ENCODE measurements at regions of chr11 and their contacts with region 1.

Region 1: DNA sequence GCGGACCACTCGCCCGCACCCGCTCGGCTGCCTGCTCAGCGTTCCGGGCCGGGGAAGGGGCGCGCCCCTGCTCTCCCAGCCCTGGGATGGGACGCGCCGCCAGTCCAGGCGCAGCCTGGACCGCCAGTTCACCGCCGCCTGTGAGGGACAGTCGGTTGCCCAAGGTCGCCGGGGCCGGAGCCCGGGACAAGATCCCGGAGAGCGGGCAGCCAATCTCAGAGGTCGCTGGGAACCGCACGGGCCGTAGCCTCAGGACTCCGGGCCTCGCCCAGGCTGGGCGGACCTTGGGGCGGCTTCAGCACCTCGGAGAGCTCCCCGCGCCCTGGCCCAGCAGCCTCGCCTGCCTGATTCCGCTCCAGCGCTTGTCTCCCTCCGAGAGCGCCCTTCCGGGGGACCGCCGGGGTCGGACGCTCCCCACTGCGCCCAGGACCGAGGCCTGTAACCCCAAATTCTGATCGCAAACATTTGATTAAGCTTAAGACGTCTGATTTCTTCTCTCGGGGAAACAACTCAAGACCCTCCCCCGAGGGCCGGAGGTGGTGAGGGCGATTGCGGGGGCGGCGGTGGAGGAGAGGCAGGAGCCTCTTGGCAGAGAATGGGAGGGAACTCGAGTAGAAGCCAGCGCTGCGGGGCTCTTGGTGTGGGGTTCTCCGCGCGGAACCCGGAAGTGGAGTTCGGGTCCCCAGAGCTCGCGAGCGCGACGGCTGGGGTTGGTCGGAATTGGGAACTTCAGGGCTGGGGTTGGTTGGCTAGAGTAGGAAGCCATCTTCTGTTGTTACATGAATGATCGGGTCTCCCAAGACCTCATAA is 1.1 kb upstream of the CHRM4 start:
- DNase-seq: peak; percentile 85
- ATAC-seq: peak; percentile 94
- H3K4me3 ChIP-seq: peak overlapping the region in 1 of 5 experiments; percentile 16
- H3K4me3 Mint-ChIP-seq: peak overlapping the region; percentile 76
- H3K27ac ChIP-seq: no peak overlapping the region
- H3K27ac Mint-ChIP-seq: no peak overlapping the region
- H3K4me1 ChIP-seq: peaks cover 28 to 43% of the 10 kb centered on the region in 2 donors
- H3K4me1 Mint-ChIP-seq: peaks cover 19% of the 10 kb centered on the region
- H3K27me3 ChIP-seq: peaks cover 0 to 48% (median 29%) of the 10 kb centered on the region in 4 experiments
- H3K27me3 Mint-ChIP-seq: peaks cover 29% of the 10 kb centered on the region
- CTCF ChIP-seq: no peak

Region 2: GRCh38 chr11:46338988-46339666 is 53.5 kb before region 1 on chr11:
- CTCF ChIA-PET with region 1: no interaction called
- POLR2A ChIA-PET with region 1: no interaction called
- intact Hi-C with region 1: no loop called
- DNase-seq: no peak
- ATAC-seq: no peak
- H3K4me3 ChIP-seq: no peak overlapping the region
- H3K4me3 Mint-ChIP-seq: no peak overlapping the region
- H3K27ac ChIP-seq: no peak overlapping the region
- H3K27ac Mint-ChIP-seq: no peak overlapping the region
- H3K4me1 ChIP-seq: peaks cover 0 to 5% of the 10 kb centered on the region in 2 donors
- H3K4me1 Mint-ChIP-seq: no peaks in the 10 kb centered on the region
- H3K27me3 ChIP-seq: peaks cover 0 to 37% (median 12%) of the 10 kb centered on the region in 4 experiments
- H3K27me3 Mint-ChIP-seq: peaks cover 49% of the 10 kb centered on the region
- CTCF ChIP-seq: no peak

Region 3: DNA sequence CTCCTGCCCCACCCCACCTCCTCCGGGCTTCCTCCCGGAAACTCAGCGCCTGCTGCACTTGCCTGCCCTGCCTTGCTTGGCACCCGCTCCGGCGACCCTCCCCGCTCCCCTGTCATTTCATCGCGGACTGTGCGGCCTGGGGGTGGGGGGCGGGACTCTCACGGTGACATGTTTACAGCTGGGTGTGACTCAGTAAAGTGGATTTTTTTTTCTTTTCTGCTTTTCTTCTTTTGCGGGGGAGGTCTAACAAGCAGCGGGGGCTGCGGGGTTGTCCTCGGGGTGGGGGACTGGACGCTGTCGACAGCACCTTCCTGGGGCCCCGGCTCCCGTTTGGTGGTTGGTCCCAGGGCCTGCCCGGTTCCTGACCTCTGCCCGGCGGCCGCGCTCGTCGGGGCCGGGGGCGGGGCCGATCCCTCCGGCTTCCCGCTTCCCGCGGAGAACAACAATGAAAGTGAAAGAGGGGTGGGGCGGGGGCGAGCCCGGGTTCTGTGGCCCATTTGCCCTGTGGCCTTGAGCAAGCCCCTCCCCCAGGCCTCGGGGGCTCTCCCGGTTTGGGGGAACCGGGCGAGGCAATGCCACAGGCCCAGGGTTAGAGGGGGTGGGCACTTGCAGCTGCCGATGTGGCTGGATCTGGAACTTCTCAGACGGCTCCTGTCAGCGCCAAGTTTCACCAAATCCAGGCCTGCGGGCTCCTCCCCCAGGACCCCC is 12.1 kb before region 1 on chr11:
- CTCF ChIA-PET with region 1: interaction called, 6 read pairs
- POLR2A ChIA-PET with region 1: interaction called, 5 read pairs
- intact Hi-C with region 1: loop called (anchors 1 kb)
- DNase-seq: peak; percentile 65
- ATAC-seq: peak; percentile 61
- H3K4me3 ChIP-seq: peak overlapping the region; percentile 34 to 84 (median 69)
- H3K4me3 Mint-ChIP-seq: peak overlapping the region; percentile 85
- H3K27ac ChIP-seq: peak overlapping the region in 1 of 2 donors; percentile 43
- H3K27ac Mint-ChIP-seq: peak overlapping the region; percentile 56
- H3K4me1 ChIP-seq: peaks cover 14 to 15% of the 10 kb centered on the region in 2 donors
- H3K4me1 Mint-ChIP-seq: peaks cover 12% of the 10 kb centered on the region
- H3K27me3 ChIP-seq: peaks cover 0 to 38% (median 20%) of the 10 kb centered on the region in 4 experiments
- H3K27me3 Mint-ChIP-seq: peaks cover 24% of the 10 kb centered on the region
- CTCF ChIP-seq: no peak

Region 4: GRCh38 chr11:46529095-46529905 is 136.7 kb after region 1 on chr11:
- CTCF ChIA-PET with region 1: interaction called, 10 read pairs
- POLR2A ChIA-PET with region 1: no interaction called
- intact Hi-C with region 1: no loop called
- DNase-seq: peak; percentile 79
- ATAC-seq: peak; percentile 100
- H3K4me3 ChIP-seq: no peak overlapping the region
- H3K4me3 Mint-ChIP-seq: no peak overlapping the region
- H3K27ac ChIP-seq: no peak overlapping the region
- H3K27ac Mint-ChIP-seq: peak overlapping the region; percentile 46
- H3K4me1 ChIP-seq: peaks cover 4 to 5% of the 10 kb centered on the region in 2 donors
- H3K4me1 Mint-ChIP-seq: peaks cover 21% of the 10 kb centered on the region
- H3K27me3 ChIP-seq: no peaks in the 10 kb centered on the region
- H3K27me3 Mint-ChIP-seq: no peaks in the 10 kb centered on the region
- CTCF ChIP-seq: peak; percentile 96

Measured in B cell (primary cell).